Lower leg skin (tissue), 4 donors: ENCODE measurements at regions of chr2 and their contacts with region 1.

Region 1: DNA sequence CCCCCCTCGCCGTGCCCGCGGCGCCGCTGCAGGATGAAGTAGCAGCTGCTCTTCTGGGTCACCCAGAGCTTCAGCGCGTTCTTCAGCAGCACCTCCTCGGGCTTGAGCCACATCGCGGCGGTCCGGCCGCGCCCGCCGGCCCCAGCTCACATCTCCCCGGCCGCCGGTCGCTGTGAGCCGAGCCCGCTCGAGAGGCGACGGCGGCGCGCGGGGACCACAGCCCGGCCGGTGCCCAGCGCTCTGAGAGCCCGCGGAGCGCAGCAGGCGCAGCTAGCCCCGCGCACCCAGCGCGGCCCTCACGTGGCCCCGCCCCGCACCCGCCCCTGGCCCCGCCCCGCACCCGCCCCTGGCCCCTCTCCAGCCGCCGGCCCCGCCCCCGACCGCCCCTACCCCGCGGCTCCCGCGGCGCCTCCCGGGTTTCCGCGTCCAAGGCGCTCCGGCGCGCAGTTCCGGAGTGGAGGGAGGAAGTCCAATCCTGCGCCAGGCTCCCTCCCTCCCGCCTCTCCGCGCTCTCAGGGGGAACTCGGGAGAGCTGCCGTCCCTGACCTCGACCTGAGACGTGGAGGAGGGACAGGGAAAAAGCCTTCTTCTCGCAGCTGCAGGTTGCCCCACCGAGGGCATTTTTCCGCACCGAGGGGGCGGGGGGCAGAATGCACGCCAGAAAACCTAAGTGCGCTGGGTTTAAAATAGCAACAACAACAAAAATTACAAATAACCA is at the start of gene TBC1D8:
- DNase-seq: peak; percentile 74 to 97
- H3K4me3 ChIP-seq: peak within 1 kb of the TSS; percentile 71
- CTCF ChIP-seq: no peak
- POLR2A ChIP-seq: peak in 1 of 2 donors; percentile 13
- total RNA-seq, gene TBC1D8: 29.4 to 102 (median 46.1) TPM

Region 2: DNA sequence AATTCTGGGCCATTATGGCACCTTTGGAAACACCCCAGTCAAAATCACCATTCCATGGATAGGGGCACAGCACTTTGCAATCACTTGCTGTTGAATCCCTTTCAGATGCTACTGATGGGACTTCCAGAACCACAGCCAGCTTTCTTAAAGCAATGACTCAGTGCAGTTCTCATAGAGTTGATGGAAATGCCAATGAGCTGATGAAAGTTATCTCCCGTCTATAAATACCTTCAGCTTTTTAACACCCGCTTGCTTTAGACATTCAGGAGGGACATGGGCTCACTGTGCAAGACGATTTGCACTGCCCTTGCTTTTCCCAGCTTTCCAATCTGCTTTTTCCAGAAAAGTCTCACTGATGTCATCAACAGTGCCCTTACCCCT is 215.9 kb before region 1 on chr2:
- intact Hi-C with region 1: no loop called
- DNase-seq: no peak
- H3K4me3 ChIP-seq: no peak overlapping the region
- CTCF ChIP-seq: no peak
- POLR2A ChIP-seq: no peak

Region 3: DNA sequence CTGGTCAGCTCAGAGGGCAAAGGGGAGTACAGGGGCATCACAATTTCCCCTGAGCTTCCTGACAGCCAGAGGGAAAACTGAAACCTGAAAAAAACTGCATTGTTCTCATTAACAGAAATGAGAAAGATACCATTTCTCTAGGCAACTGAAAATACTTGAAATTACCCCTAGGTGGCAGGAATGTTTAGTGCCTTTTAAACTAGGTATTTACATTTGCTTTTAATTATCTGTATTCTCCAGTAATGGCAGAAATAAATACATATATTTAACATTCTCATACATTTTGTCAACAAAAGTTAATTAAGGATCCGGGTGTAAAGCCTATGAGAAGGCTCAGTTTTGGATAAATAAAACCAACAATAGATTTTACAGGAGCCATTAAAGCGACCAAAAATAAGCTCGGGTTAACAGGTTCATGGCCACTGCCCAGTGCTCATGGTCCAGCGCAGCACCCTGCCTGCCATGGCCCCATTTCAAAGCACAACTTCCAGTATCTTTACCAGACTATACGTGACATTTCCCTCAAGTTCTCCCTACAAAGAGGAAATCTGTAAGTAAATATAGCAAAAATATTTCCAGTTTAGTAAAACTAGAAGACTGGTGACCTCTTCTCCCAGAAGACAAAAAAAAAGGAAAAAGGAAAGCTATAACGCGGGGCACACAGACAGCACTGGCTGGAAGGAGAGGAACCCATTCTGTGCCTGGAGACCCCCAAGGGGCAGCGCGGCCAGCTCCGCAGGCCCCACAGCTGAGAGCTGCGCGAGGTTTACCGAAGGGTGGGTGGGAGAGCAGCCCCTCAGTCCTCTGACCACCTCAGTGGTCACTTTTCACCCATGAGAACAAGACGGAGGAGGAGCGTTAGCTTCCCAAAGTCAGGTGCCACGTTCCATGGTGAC is 114.5 kb before region 1 on chr2:
- intact Hi-C with region 1: loop called (anchors 5 kb)
- DNase-seq: no peak
- H3K4me3 ChIP-seq: no peak overlapping the region
- CTCF ChIP-seq: no peak
- POLR2A ChIP-seq: no peak

Region 4: DNA sequence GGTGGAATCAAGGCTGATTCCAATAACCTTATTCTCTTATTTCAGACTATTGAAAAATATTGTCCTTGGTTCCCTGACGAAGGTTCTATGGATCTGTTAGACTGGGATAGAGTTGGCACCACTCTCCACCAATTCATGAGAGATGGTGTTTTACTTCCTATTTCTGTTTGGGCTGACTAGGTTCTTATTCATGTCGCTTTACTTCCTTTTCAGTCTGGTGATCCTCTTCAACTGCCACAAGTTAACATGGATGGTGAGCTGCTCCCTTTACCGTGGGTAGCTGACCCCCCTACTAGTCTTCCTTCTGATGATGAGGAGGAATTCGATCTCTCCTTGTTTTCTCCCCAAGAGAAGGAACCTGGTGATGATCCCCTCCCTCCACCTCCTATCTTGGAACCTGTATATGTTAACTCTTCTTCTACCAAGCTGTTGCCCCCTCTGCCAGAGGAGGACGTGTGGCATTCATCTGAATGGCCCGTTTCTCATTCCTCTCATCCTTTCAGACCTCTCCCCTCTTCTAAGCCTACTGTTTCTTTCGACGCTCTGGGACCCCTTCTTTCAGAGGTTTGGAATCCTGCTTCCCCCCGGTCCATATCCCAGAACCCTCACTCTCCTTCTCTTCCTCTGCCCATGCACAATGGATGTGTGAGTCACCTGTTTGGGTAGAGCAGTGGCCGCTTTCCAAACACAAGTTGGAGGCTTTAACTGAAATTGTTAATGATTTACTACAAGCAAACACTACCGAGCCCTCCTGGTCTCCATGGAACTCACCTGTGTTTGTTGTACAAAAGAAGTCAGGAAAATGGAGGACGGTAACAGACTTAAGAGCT is 87.8 kb after region 1 on chr2:
- intact Hi-C with region 1: no loop called
- DNase-seq: peak in 1 of 2 donors; percentile 23
- H3K4me3 ChIP-seq: no peak overlapping the region
- CTCF ChIP-seq: no peak
- POLR2A ChIP-seq: no peak